Activated T-helper 1 cell treated with anti-CD3 and anti-CD28 coated beads, Interleukin-12 subunit alpha, Interleukin-12 subunit beta, Interleukin-2, Interleukin-4 antibody, amounts not matched to agents 30 ng/mL and 10 ng/mL and 1 ng/mL, durations not matched to agents 14 hours and 24 hours and 36 hours (primary cell): ENCODE measurements at regions of chr6 and their contacts with region 1.

Region 1: GRCh38 chr6:128520436-128521281 is at the start of gene PTPRK:
- DNase-seq: peak; percentile 81
- H3K4me3 Mint-ChIP-seq: peak within 1 kb of the TSS; percentile 93
- H3K27ac Mint-ChIP-seq: peak within 1 kb of the TSS; percentile 86
- H3K4me1 Mint-ChIP-seq: peaks cover 23% of the 10 kb centered on the region
- H3K27me3 Mint-ChIP-seq: peaks cover 76% of the 10 kb centered on the region
- total RNA-seq, gene PTPRK: 3.1 and 3.2 TPM in 2 replicates

Region 2: GRCh38 chr6:127266178-127266891 is 1254.3 kb before region 1 on chr6 and contains the start of gene RNF146:
- intact Hi-C with region 1: loop called (anchors 10 kb)
- DNase-seq: peak; percentile 63
- H3K4me3 Mint-ChIP-seq: peak within 1 kb of the TSS; percentile 100
- H3K27ac Mint-ChIP-seq: peak within 1 kb of the TSS; percentile 100
- H3K4me1 Mint-ChIP-seq: peaks cover 42% of the 10 kb centered on the region
- H3K27me3 Mint-ChIP-seq: peaks cover 9% of the 10 kb centered on the region
- total RNA-seq, gene RNF146: 18.3 and 20.5 TPM in 2 replicates

Region 3: GRCh38 chr6:127855542-127856159 is 665.0 kb before region 1 on chr6:
- intact Hi-C with region 1: loop called (anchors 2 kb)
- DNase-seq: no peak
- H3K4me3 Mint-ChIP-seq: no peak overlapping the region
- H3K27ac Mint-ChIP-seq: peak overlapping the region; percentile 14
- H3K4me1 Mint-ChIP-seq: peaks cover 48% of the 10 kb centered on the region
- H3K27me3 Mint-ChIP-seq: no peaks in the 10 kb centered on the region

Region 4: DNA sequence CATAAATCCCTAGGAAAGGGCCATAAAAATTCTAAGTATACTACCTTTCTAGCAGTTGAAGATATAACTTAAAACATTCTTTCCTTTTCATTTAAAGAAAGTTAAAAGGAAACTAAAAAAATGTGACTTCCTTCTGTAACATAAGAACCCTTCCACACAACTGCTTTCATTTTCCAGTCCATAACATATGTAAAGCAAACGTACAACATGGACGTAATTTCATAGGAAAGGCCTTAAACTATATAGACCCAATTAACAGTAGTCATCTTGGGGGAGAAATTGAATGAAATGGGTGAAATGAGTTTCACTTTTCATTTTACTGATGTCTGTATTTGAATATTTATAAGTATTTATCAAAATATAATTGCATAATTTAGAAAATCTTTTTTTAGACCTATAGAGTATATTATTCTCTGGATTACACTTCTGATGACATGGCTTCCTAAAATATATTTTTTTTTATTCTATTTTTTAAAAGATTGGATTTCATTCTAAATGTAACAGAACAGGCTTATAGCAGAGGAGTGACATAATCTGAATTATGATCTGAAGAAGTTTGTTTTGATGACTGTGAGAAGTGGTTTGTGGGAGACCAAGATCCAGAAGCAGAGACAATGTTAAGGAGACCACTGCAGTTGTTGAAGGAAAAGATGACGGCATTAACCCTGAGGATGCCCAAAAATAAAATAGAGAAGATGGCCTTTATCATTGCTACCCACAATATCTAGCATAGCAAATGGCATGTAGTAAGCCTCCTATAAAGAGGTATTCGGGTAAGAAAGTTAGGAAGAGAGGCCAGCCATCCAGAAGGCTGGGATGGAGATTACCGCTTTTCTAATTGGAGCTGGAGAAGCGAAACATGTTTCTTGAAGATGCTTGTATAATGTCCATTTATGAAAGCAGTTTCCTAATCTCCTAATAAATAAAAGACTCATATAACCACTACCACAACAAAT is 260.7 kb before region 1 on chr6:
- intact Hi-C with region 1: loop called (anchors 2 kb)
- DNase-seq: no peak
- H3K4me3 Mint-ChIP-seq: peak overlapping the region; percentile 25
- H3K27ac Mint-ChIP-seq: no peak overlapping the region
- H3K4me1 Mint-ChIP-seq: peaks cover 30% of the 10 kb centered on the region
- H3K27me3 Mint-ChIP-seq: no peaks in the 10 kb centered on the region

Region 5: DNA sequence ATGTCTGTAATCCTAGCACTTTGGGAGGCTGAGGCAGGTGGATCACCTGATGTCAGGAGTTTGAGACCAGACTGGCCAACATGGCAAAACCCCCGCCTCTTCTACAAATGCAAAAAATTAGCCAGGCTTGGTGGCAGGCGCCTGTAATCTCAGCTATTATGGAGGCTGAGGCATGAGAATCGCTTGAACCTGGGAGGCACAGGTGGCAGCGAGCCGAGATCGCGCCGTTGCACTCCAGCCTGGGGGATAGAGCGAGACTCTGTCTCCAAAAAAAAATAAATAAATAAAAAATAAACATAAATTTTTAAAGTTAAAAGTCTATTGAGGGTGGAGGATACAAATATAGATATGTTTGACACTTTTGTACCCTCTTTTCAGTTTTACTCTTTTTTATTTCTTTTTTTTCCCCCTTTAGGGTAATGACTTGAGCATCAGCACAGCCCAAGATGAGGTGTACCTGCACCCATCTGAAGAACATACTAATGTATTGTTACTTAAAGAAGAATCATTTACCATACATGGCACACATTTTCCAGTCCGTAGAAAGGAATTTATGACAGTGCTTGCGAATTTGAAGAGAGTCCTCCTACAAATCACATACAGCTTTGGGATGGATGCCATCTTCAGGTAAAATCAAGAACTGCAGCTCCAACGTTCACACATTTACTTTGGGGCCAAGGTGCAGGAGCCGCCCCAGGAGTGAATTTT is 731.2 kb after region 1 on chr6:
- intact Hi-C with region 1: loop called (anchors 5 kb)
- DNase-seq: peak; percentile 27
- H3K4me3 Mint-ChIP-seq: no peak overlapping the region
- H3K27ac Mint-ChIP-seq: no peak overlapping the region
- H3K4me1 Mint-ChIP-seq: peaks cover 19% of the 10 kb centered on the region
- H3K27me3 Mint-ChIP-seq: peaks cover 37% of the 10 kb centered on the region